T-cell (primary cell): ENCODE measurements at regions of chr20 and their contacts with region 1.

Region 1: GRCh38 chr20:11607047-11607446 is 310.6 kb upstream of the BTBD3 start:
- DNase-seq: no peak
- ATAC-seq: no peak
- H3K4me3 ChIP-seq: no peak overlapping the region
- H3K4me3 Mint-ChIP-seq: no peak overlapping the region
- H3K27ac ChIP-seq: no peak overlapping the region
- H3K27ac Mint-ChIP-seq: no peak overlapping the region
- H3K4me1 ChIP-seq: no peaks in the 10 kb centered on the region
- H3K4me1 Mint-ChIP-seq: no peaks in the 10 kb centered on the region
- H3K27me3 ChIP-seq: no peaks in the 10 kb centered on the region
- H3K27me3 Mint-ChIP-seq: no peaks in the 10 kb centered on the region

Region 2: GRCh38 chr20:11569163-11569562 is 37.9 kb before region 1 on chr20:
- CTCF ChIA-PET with region 1: no interaction called
- POLR2A ChIA-PET with region 1: no interaction called
- DNase-seq: no peak
- ATAC-seq: no peak
- H3K4me3 ChIP-seq: no peak overlapping the region
- H3K4me3 Mint-ChIP-seq: no peak overlapping the region
- H3K27ac ChIP-seq: no peak overlapping the region
- H3K27ac Mint-ChIP-seq: no peak overlapping the region
- H3K4me1 ChIP-seq: no peaks in the 10 kb centered on the region
- H3K4me1 Mint-ChIP-seq: no peaks in the 10 kb centered on the region
- H3K27me3 ChIP-seq: no peaks in the 10 kb centered on the region
- H3K27me3 Mint-ChIP-seq: no peaks in the 10 kb centered on the region

Region 3: DNA sequence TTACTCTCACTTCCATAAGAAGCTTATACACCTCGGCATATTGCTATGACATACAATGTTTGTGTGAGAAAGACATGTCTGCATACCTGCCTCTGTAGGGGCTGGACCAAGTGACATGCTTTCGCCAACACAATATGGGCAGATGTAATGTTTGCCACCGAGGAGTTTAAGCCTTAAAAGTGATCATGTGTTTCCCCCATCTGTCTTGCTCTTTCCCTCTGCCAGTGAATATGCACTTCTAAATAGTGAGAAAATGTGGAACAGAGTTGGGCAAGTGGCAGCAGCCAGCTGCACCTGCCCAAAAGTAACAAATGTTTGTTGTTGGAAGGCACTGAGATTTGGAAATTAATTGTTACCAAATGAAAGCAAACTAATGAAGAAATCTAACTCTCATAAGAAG is 35.8 kb after region 1 on chr20:
- CTCF ChIA-PET with region 1: interaction called in 1 of 2 experiments, 4 read pairs
- POLR2A ChIA-PET with region 1: interaction called in 1 of 2 experiments, 11 read pairs
- DNase-seq: no peak
- ATAC-seq: no peak
- H3K4me3 ChIP-seq: no peak overlapping the region
- H3K4me3 Mint-ChIP-seq: no peak overlapping the region
- H3K27ac ChIP-seq: no peak overlapping the region
- H3K27ac Mint-ChIP-seq: no peak overlapping the region
- H3K4me1 ChIP-seq: no peaks in the 10 kb centered on the region
- H3K4me1 Mint-ChIP-seq: no peaks in the 10 kb centered on the region
- H3K27me3 ChIP-seq: no peaks in the 10 kb centered on the region
- H3K27me3 Mint-ChIP-seq: no peaks in the 10 kb centered on the region

Region 4: GRCh38 chr20:12740647-12741046 is 1133.6 kb after region 1 on chr20:
- CTCF ChIA-PET with region 1: no interaction called
- POLR2A ChIA-PET with region 1: no interaction called
- DNase-seq: no peak
- ATAC-seq: no peak
- H3K4me3 ChIP-seq: no peak overlapping the region
- H3K4me3 Mint-ChIP-seq: no peak overlapping the region
- H3K27ac ChIP-seq: no peak overlapping the region
- H3K27ac Mint-ChIP-seq: no peak overlapping the region
- H3K4me1 ChIP-seq: no peaks in the 10 kb centered on the region
- H3K4me1 Mint-ChIP-seq: no peaks in the 10 kb centered on the region
- H3K27me3 ChIP-seq: no peaks in the 10 kb centered on the region
- H3K27me3 Mint-ChIP-seq: no peaks in the 10 kb centered on the region